WTC11 (cell line): ENCODE measurements at regions of chr7 and their contacts with region 1.

Region 1: GRCh38 chr7:74164985-74165456 is 9.1 kb upstream of the EIF4H start:
- DNase-seq: peak; percentile 49
- ATAC-seq: peak; percentile 62
- H3K4me3 Mint-ChIP-seq: no peak overlapping the region
- H3K27ac Mint-ChIP-seq: 0 out of 2 replicates have a peak overlapping the region, but pooled peaks have one; percentile 65
- H3K4me1 Mint-ChIP-seq: 0 out of 2 replicates have a peak, but pooled peaks cover 4% of the 10 kb centered on the region
- H3K27me3 Mint-ChIP-seq: no peaks in the 10 kb centered on the region
- CTCF ChIP-seq: no peak

Region 2: GRCh38 chr7:74059681-74060578 is 105.1 kb before region 1 on chr7:
- CTCF ChIA-PET with region 1: no interaction called
- POLR2A ChIA-PET with region 1: no interaction called
- DNase-seq: no peak
- ATAC-seq: no peak; the same call in 1 of the 2 replicates
- H3K4me3 Mint-ChIP-seq: no peak overlapping the region
- H3K27ac Mint-ChIP-seq: no peak overlapping the region
- H3K4me1 Mint-ChIP-seq: no peaks in the 10 kb centered on the region
- H3K27me3 Mint-ChIP-seq: no peaks in the 10 kb centered on the region
- CTCF ChIP-seq: no peak

Region 3: DNA sequence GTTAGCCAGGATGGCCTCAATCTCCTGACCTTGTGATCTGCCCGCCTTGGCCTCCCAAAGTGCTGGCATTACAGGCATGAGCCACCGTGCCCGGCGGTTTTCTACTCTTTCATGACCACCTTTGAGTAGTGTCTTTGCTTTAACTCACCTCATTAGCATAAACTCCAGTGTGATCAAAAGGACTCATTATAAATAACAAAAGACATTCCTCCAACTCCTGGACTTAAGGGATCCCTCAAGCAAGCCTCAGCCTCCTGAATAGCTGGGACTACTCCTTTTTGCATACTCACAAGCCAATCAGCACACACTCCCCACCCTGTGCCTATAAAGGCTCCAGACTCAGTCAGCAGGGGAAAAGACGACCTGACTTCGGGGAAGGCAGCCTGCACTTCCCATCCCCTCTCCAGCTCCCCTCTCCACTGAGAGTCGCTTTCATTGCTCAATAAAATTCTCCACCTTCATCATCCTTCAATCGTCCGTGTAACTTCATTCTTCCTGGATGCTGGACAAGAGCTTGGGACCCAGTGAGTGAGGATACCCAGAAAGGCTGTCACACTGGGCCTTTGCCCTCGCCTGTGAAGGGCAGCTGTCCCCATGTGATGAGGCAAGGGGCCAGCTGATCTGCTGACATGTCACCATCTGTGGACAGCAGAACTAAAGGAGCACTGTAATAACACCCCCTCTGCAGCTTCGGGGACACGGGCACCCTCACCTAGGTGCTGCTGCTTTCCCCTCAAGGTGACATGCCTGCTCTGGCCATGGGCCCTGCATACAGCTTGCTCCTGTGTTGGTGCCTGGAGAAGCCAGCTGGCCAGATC is 25.8 kb before region 1 on chr7:
- CTCF ChIA-PET with region 1: interaction called, 12 read pairs
- POLR2A ChIA-PET with region 1: no interaction called
- DNase-seq: peak; percentile 61
- ATAC-seq: peak; percentile 94
- H3K4me3 Mint-ChIP-seq: peak overlapping the region; percentile 63
- H3K27ac Mint-ChIP-seq: peak overlapping the region; percentile 91
- H3K4me1 Mint-ChIP-seq: peaks cover 31% of the 10 kb centered on the region
- H3K27me3 Mint-ChIP-seq: no peaks in the 10 kb centered on the region
- CTCF ChIP-seq: no peak